CD4-positive, alpha-beta memory T cell (primary cell): ENCODE measurements at regions of chr6 and their contacts with region 1.

Region 1: DNA sequence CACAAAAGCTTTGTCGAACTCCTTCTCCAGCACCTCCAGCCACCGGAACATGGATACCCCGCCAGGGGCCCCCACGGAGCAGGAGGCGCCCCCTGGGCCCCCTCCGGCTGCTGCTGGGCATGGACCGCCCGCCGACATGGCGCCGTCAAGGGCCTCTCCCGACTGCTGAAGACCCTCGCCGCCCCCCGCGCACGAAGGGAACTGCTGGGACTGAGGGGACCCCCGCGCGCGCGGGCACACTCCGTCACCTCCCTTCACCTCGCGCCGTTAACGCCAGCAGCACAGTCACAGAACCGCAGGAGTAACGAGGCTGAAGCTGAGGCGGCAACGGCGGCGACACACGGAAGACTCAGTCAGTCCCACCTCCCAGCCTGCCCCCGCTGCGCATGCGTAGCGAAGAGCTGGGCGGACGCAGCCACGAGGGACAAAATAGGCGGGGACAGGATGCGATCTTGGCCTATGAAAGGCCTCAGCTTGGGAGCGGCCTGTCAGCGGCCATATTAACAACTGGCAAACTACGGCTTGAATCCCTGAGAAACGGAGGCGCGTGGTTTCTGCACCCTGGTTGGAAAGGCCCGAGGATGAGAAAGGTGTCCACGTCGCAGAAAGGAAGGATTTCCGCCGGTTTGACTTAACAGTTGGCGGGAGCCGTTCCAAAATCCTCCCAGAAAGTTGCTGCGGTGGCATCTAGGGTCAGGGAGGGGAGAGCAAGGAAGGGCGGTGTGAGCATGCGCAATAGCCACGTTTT is at the start of gene GOPC:
- DNase-seq: peak; percentile 94 to 98 (median 97)
- H3K4me3 ChIP-seq: peak within 1 kb of the TSS; percentile 53 to 87
- H3K4me3 Mint-ChIP-seq: peak within 1 kb of the TSS; percentile 96 to 100 (median 100)
- H3K27ac ChIP-seq: peak within 1 kb of the TSS; percentile 75
- H3K27ac Mint-ChIP-seq: peak within 1 kb of the TSS; percentile 93 to 100 (median 99)
- H3K4me1 ChIP-seq: peaks cover 38% of the 10 kb centered on the region
- H3K4me1 Mint-ChIP-seq: peaks cover 34 to 52% (median 43%) of the 10 kb centered on the region in 4 donors
- H3K27me3 ChIP-seq: no peaks in the 10 kb centered on the region
- H3K27me3 Mint-ChIP-seq: peaks cover 0 to 3% of the 10 kb centered on the region in 2 donors
- total RNA-seq, gene GOPC: 37.7 to 37.8 TPM

Region 2: GRCh38 chr6:116680975-116681808 is 921.1 kb before region 1 on chr6 and contains the start of gene KPNA5:
- CTCF ChIA-PET with region 1: no interaction called
- POLR2A ChIA-PET with region 1: no interaction called
- intact Hi-C with region 1: loop called (anchors 2 kb)
- DNase-seq: peak; percentile 83 to 93 (median 88)
- H3K4me3 ChIP-seq: peak within 1 kb of the TSS; percentile 75 to 95
- H3K4me3 Mint-ChIP-seq: peak within 1 kb of the TSS; percentile 96 to 99 (median 98)
- H3K27ac ChIP-seq: peak within 1 kb of the TSS; percentile 84
- H3K27ac Mint-ChIP-seq: peak within 1 kb of the TSS; percentile 95 to 99 (median 99)
- H3K4me1 ChIP-seq: peaks cover 34% of the 10 kb centered on the region
- H3K4me1 Mint-ChIP-seq: peaks cover 33 to 61% (median 46%) of the 10 kb centered on the region in 4 donors
- H3K27me3 ChIP-seq: no peaks in the 10 kb centered on the region
- H3K27me3 Mint-ChIP-seq: no peaks in the 10 kb centered on the region
- total RNA-seq, gene KPNA5: 60.7 to 61.8 TPM

Region 3: GRCh38 chr6:117482240-117483003 is 119.9 kb before region 1 on chr6 and contains the start of gene DCBLD1:
- CTCF ChIA-PET with region 1: interaction called, 14 read pairs
- POLR2A ChIA-PET with region 1: interaction called, 15 read pairs
- intact Hi-C with region 1: loop called (anchors 1 kb)
- DNase-seq: peak; percentile 46 to 62 (median 55)
- H3K4me3 ChIP-seq: peak within 1 kb of the TSS; percentile 38 to 57
- H3K4me3 Mint-ChIP-seq: peak within 1 kb of the TSS; percentile 91 to 98 (median 94)
- H3K27ac ChIP-seq: peak within 1 kb of the TSS; percentile 36
- H3K27ac Mint-ChIP-seq: peak within 1 kb of the TSS; percentile 71 to 85 (median 79)
- H3K4me1 ChIP-seq: peaks cover 21% of the 10 kb centered on the region
- H3K4me1 Mint-ChIP-seq: peaks cover 13 to 18% (median 14%) of the 10 kb centered on the region in 4 donors
- H3K27me3 ChIP-seq: no peaks in the 10 kb centered on the region
- H3K27me3 Mint-ChIP-seq: peaks cover 5 to 15% of the 10 kb centered on the region in 2 donors
- total RNA-seq, gene DCBLD1: 8.7 to 9.7 TPM

Region 4: DNA sequence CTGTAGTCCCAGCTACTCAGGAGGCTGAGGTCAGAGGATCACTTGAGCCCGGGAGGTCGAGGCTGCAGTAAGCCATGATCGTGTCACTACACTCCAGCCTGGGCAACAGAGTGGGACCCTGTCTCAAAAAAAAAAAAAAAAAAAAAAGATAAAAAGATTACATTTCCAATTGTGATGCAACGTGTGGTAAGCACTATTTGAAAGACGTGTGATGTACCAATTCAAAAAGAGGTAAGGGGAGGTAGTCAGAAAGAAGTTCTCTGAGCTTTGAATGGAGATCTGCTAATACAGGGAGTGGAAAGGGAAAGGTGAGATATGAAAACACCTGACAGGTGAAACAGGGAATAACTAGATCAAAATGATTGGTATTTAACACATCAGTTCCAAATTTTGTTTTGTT is 11.9 kb before region 1 on chr6:
- CTCF ChIA-PET with region 1: interaction called, 10 read pairs
- POLR2A ChIA-PET with region 1: no interaction called
- intact Hi-C with region 1: no loop called
- DNase-seq: no peak
- H3K4me3 ChIP-seq: no peak overlapping the region
- H3K4me3 Mint-ChIP-seq: no peak overlapping the region
- H3K27ac ChIP-seq: no peak overlapping the region
- H3K27ac Mint-ChIP-seq: peak overlapping the region in 1 of 7 donors; percentile 73
- H3K4me1 ChIP-seq: peaks cover 4% of the 10 kb centered on the region
- H3K4me1 Mint-ChIP-seq: peaks cover 13 to 30% (median 19%) of the 10 kb centered on the region in 4 donors
- H3K27me3 ChIP-seq: no peaks in the 10 kb centered on the region
- H3K27me3 Mint-ChIP-seq: no peaks in the 10 kb centered on the region

Region 5: DNA sequence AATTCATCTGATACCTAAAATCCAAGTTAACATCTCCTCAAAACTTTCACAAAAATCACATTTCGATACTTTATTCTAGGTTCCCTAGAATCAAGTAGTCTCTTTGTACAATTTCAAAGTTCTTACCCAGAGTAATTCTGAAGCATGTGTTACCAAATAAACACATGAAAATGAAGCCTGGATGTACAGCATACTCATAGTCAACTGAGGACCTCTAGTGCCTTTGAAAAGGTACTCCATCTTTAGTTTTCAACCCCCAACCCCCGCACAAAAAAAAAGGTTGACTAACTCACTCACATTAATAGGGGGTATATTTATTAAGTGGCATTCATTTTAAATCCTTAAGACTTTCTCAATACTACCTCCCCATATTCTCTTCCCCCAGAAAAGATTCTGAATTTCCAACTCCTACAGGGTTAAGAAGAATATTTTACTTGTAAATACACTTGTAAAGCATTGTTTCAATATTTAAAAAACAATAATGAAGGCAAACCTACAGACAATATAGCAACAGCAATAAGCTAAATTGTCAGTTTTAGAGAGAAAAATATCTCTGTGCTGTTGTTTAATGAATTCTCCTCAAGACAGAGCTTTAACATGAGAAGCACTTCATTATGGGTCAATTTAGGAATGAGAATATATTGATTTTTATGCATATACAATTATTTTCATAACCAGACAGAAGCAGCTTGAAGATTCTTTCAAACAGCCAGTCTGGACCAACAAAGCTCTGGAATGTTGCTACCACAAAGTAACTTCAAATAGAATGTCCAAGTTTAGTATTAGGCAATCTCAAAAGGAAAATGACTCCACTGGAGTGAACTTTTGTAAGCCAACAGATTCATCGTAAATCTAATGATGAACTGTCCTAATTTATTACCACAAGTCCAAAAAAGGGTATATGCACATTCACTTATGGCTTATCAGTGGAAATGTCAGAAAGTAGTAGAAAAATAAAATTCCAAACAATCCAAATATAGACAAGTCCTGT is 949.0 kb after region 1 on chr6:
- CTCF ChIA-PET with region 1: no interaction called
- POLR2A ChIA-PET with region 1: no interaction called
- intact Hi-C with region 1: loop called (anchors 10 kb)
- DNase-seq: peak in 4 of 5 donors; percentile 30 to 54 (median 41)
- H3K4me3 ChIP-seq: no peak overlapping the region
- H3K4me3 Mint-ChIP-seq: peak overlapping the region in 1 of 8 donors; percentile 57
- H3K27ac ChIP-seq: no peak overlapping the region
- H3K27ac Mint-ChIP-seq: peak overlapping the region in 3 of 7 donors; percentile 52 to 74 (median 72)
- H3K4me1 ChIP-seq: peaks cover 23% of the 10 kb centered on the region
- H3K4me1 Mint-ChIP-seq: peaks cover 18 to 37% (median 31%) of the 10 kb centered on the region in 4 donors
- H3K27me3 ChIP-seq: no peaks in the 10 kb centered on the region
- H3K27me3 Mint-ChIP-seq: no peaks in the 10 kb centered on the region